ENCODE measurements at regions of chr6 and their contacts with region 1.

Region 1: DNA sequence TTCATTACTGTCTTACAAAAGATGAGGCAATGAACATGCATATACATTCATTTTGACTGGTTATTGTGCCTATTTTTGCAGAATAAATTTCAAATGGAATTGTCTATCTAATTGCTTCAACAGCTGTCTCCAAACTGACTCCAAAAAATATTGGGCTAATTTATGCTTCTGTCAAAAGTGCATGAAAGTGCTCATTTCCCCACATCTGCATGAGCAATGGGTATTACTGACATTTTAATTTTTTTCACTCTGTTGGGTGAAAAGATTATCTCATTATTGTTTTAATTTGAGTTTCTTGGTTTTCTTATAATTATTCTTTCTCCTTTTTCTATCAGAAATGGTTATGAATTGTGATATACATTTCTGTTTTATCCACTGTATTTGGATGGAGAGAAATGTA is 404.2 kb downstream of the QKI start:
- DNase-seq: no peak
- H3K4me3 ChIP-seq: no peak overlapping the region
- H3K27ac ChIP-seq: no peak overlapping the region
- H3K4me1 ChIP-seq: no peaks in the 10 kb centered on the region
- H3K27me3 ChIP-seq: no peaks in the 10 kb centered on the region
- CTCF ChIP-seq: no peak
- POLR2A ChIP-seq: no peak

Region 2: GRCh38 chr6:163857421-163857820 is 38.7 kb after region 1 on chr6:
- CTCF ChIA-PET with region 1: no interaction called
- POLR2A ChIA-PET with region 1: no interaction called
- dilution Hi-C with region 1: no loop called
- intact Hi-C with region 1: loop called (anchors 1 kb)
- DNase-seq: no peak
- H3K4me3 ChIP-seq: no peak overlapping the region
- H3K27ac ChIP-seq: no peak overlapping the region
- H3K4me1 ChIP-seq: no peaks in the 10 kb centered on the region
- H3K27me3 ChIP-seq: no peaks in the 10 kb centered on the region
- CTCF ChIP-seq: no peak
- POLR2A ChIP-seq: no peak

Region 3: DNA sequence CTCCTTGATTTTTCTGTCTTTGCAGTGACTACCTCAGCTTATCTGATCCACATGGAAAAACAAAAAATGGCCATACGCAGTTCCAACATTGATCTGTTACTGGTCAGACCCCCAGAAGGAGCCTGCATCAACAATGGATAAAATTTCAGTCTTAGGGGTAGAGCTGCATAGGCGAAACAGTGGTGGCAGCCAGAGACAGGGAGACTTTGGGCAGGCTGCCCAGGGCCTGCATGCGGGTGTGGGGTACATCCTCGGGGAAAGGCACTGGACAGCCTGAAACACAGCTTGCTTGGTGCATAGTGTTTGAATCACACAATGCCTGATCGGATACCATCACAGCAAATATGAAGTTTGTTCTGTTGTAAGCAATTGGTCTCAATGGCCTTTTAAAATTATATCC is 443.6 kb after region 1 on chr6:
- CTCF ChIA-PET with region 1: no interaction called
- POLR2A ChIA-PET with region 1: no interaction called
- dilution Hi-C with region 1: no loop called
- intact Hi-C with region 1: no loop called
- DNase-seq: no peak
- H3K4me3 ChIP-seq: no peak overlapping the region
- H3K27ac ChIP-seq: no peak overlapping the region
- H3K4me1 ChIP-seq: no peaks in the 10 kb centered on the region
- H3K27me3 ChIP-seq: no peaks in the 10 kb centered on the region
- CTCF ChIP-seq: no peak
- POLR2A ChIP-seq: no peak

Measured in endothelial cell of umbilical vein (primary cell).